CD4-positive, alpha-beta memory T cell (primary cell): ENCODE measurements at regions of chr18 and their contacts with region 1.

Region 1: GRCh38 chr18:8339952-8340351 is 269.3 kb upstream of the RAB12 start:
- DNase-seq: no peak
- H3K4me3 ChIP-seq: no peak overlapping the region
- H3K4me3 Mint-ChIP-seq: no peak overlapping the region
- H3K27ac ChIP-seq: no peak overlapping the region
- H3K27ac Mint-ChIP-seq: no peak overlapping the region
- H3K4me1 ChIP-seq: no peaks in the 10 kb centered on the region
- H3K4me1 Mint-ChIP-seq: no peaks in the 10 kb centered on the region
- H3K27me3 ChIP-seq: no peaks in the 10 kb centered on the region
- H3K27me3 Mint-ChIP-seq: no peaks in the 10 kb centered on the region

Region 2: GRCh38 chr18:8264116-8264515 is 75.8 kb before region 1 on chr18:
- CTCF ChIA-PET with region 1: no interaction called
- POLR2A ChIA-PET with region 1: no interaction called
- intact Hi-C with region 1: no loop called
- DNase-seq: no peak
- H3K4me3 ChIP-seq: no peak overlapping the region
- H3K4me3 Mint-ChIP-seq: no peak overlapping the region
- H3K27ac ChIP-seq: no peak overlapping the region
- H3K27ac Mint-ChIP-seq: no peak overlapping the region
- H3K4me1 ChIP-seq: no peaks in the 10 kb centered on the region
- H3K4me1 Mint-ChIP-seq: peaks cover 0 to 3% (median 0%) of the 10 kb centered on the region in 4 donors
- H3K27me3 ChIP-seq: no peaks in the 10 kb centered on the region
- H3K27me3 Mint-ChIP-seq: no peaks in the 10 kb centered on the region

Region 3: GRCh38 chr18:8277270-8277669 is 62.7 kb before region 1 on chr18:
- CTCF ChIA-PET with region 1: no interaction called
- POLR2A ChIA-PET with region 1: no interaction called
- intact Hi-C with region 1: loop called (anchors 10 kb)
- DNase-seq: no peak
- H3K4me3 ChIP-seq: no peak overlapping the region
- H3K4me3 Mint-ChIP-seq: no peak overlapping the region
- H3K27ac ChIP-seq: no peak overlapping the region
- H3K27ac Mint-ChIP-seq: no peak overlapping the region
- H3K4me1 ChIP-seq: no peaks in the 10 kb centered on the region
- H3K4me1 Mint-ChIP-seq: no peaks in the 10 kb centered on the region
- H3K27me3 ChIP-seq: no peaks in the 10 kb centered on the region
- H3K27me3 Mint-ChIP-seq: no peaks in the 10 kb centered on the region

Region 4: DNA sequence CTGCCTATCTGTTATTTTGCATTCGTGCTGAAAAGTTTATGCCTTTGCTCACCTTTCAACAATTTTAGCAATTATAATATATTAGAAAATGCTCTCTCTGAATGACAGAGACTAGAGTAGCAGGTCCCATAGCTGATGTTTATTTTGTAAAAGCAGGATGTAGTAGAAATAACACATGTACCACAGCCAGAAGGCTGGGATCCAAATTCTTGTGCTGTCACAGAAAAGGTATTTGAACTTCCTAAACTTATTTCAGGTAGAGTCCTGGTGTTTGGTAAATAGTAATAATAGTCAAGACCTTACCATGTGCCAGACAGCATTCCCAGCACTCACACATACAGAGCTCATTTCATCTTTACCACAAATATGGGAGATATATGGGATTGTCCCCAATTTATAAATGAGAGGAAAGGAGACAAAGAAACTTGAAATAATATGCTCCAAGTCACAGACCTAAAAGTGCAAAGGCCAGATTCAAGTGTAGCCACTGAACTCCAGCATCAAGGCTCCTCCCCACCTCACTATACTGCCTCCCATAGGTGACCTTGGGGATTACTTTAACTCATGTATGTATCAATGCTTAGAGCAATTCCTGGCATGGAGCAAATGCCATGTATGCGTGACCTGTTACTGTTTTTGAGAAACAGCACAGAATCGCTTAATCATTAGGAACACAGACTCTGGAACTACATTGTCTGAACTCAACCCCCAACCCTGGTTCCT is 15.4 kb before region 1 on chr18:
- CTCF ChIA-PET with region 1: no interaction called
- POLR2A ChIA-PET with region 1: no interaction called
- intact Hi-C with region 1: no loop called
- DNase-seq: no peak
- H3K4me3 ChIP-seq: no peak overlapping the region
- H3K4me3 Mint-ChIP-seq: no peak overlapping the region
- H3K27ac ChIP-seq: no peak overlapping the region
- H3K27ac Mint-ChIP-seq: no peak overlapping the region
- H3K4me1 ChIP-seq: no peaks in the 10 kb centered on the region
- H3K4me1 Mint-ChIP-seq: no peaks in the 10 kb centered on the region
- H3K27me3 ChIP-seq: no peaks in the 10 kb centered on the region
- H3K27me3 Mint-ChIP-seq: no peaks in the 10 kb centered on the region